ENCODE measurements at regions of chr13 and their contacts with region 1.

Region 1: GRCh38 chr13:50801087-50801931 is 42.2 kb downstream of the DLEU7 start:
- DNase-seq: peak; percentile 69 to 76 (median 71)
- H3K4me3 ChIP-seq: peak overlapping the region in 1 of 3 experiments; percentile 26
- H3K4me3 Mint-ChIP-seq: peak overlapping the region; percentile 45 to 74
- H3K27ac ChIP-seq: peak overlapping the region in 1 of 2 donors; percentile 3
- H3K27ac Mint-ChIP-seq: peak overlapping the region in 2 of 7 donors; percentile 5 to 6
- H3K4me1 ChIP-seq: peaks cover 18 to 30% of the 10 kb centered on the region in 2 donors
- H3K4me1 Mint-ChIP-seq: peaks cover 29% of the 10 kb centered on the region
- H3K27me3 ChIP-seq: no peaks in the 10 kb centered on the region
- H3K27me3 Mint-ChIP-seq: peaks cover 0 to 2% (median 0%) of the 10 kb centered on the region in 3 donors
- CTCF ChIP-seq: peak; percentile 88

Region 2: DNA sequence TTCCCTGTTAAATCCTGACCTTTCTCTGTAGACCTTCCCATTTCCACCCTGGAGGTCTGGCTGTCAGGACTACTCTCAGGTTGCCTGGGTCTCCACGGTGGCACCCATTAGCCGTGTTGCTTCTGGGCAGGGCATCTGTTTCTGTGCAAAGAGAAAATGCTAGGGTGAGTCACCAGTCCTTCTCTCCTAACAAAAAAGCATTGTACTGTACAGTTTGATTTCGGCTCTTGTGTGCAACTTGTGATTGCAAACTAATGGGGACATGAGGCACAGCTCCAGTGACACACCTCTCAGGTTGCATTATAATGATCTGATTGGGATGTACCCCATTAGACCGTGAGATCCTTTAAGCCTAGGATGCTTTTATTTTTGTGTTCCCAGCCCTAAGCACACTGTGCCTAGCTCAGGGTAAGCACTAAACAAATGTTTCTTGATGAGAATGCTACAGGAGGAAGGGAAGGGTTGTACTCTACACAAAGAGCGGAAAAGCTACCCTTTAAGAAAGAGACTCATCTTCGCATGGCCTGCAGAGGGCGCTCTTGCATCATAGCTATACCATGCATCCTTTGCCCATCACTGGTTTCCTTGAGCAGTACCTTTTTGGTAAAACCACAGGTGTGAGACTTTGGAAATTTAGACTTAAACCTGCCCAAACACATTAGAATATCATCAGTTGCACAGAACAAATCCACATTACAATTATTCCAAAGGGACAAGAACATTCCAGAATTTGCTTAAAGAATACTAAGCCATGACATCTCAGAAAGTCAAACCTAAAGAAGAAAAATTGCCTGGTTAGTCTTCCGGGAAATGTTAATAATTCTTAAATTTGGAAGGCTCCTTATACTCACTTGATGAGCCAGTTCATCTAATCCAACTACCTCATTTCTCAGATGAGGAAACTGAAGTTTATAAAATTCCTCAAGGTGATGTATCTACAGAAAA is 824.7 kb before region 1 on chr13:
- intact Hi-C with region 1: loop called in 1 of 2 experiments (anchors 10 kb)
- DNase-seq: peak; percentile 54 to 74 (median 71)
- H3K4me3 ChIP-seq: no peak overlapping the region
- H3K4me3 Mint-ChIP-seq: no peak overlapping the region
- H3K27ac ChIP-seq: no peak overlapping the region
- H3K27ac Mint-ChIP-seq: peak overlapping the region in 1 of 7 donors; percentile 38
- H3K4me1 ChIP-seq: no peaks in the 10 kb centered on the region
- H3K4me1 Mint-ChIP-seq: peaks cover 11% of the 10 kb centered on the region
- H3K27me3 ChIP-seq: no peaks in the 10 kb centered on the region
- H3K27me3 Mint-ChIP-seq: peaks cover 0 to 2% (median 0%) of the 10 kb centered on the region in 3 donors
- CTCF ChIP-seq: peak; percentile 94

Region 3: DNA sequence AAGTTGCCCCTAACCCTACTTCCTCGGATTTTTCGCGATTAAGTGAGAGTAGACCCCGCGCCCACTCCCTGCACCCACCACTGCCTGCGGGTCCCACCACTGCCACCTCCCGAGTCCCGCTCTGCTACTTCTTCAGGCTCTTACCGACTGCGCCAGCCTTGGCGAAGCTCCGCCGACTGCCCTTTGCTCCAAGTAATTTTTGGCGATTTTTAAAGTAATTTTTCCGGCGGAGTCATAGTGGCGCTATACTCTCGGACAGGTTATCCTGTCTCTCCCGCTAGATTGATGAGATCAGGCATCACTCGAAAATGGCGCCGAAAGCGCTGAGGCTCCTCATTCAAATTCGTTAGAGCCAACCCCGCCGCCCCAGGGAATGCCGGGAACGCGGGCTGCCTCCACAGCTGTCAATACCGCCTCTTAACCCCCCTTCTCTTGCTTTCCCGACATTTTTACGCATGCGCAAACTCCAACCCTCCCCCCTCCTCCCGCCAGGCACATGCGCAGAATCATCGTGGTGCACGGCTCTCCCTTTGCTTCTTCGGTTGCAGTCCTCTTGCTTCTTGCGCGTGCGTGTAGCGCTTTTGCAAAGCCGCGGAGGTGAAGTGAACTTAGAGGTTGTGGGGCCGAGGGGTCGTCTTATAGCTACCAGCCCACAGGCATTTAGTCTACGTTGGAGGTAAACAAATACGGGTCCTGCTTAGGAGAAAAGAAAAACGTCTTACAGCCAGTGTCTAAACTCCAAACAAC is 719.5 kb before region 1 on chr13:
- intact Hi-C with region 1: loop called in 1 of 2 experiments (anchors 5 kb)
- DNase-seq: peak; percentile 97 to 99 (median 97)
- H3K4me3 ChIP-seq: peak overlapping the region; percentile 79 to 94 (median 91)
- H3K4me3 Mint-ChIP-seq: peak overlapping the region; percentile 99 to 100
- H3K27ac ChIP-seq: peak overlapping the region; percentile 80 to 85
- H3K27ac Mint-ChIP-seq: peak overlapping the region; percentile 90 to 98 (median 95)
- H3K4me1 ChIP-seq: peaks cover 49 to 74% of the 10 kb centered on the region in 2 donors
- H3K4me1 Mint-ChIP-seq: peaks cover 50% of the 10 kb centered on the region
- H3K27me3 ChIP-seq: no peaks in the 10 kb centered on the region
- H3K27me3 Mint-ChIP-seq: no peaks in the 10 kb centered on the region
- CTCF ChIP-seq: no peak

Region 4: GRCh38 chr13:50626101-50626547 is 175.2 kb before region 1 on chr13:
- intact Hi-C with region 1: loop called in 1 of 2 experiments (anchors 10 kb)
- DNase-seq: peak; percentile 78 to 93 (median 88)
- H3K4me3 ChIP-seq: no peak overlapping the region
- H3K4me3 Mint-ChIP-seq: no peak overlapping the region
- H3K27ac ChIP-seq: peak overlapping the region; percentile 4 to 82
- H3K27ac Mint-ChIP-seq: peak overlapping the region; percentile 80 to 92 (median 89)
- H3K4me1 ChIP-seq: peaks cover 30 to 34% of the 10 kb centered on the region in 2 donors
- H3K4me1 Mint-ChIP-seq: peaks cover 32% of the 10 kb centered on the region
- H3K27me3 ChIP-seq: no peaks in the 10 kb centered on the region
- H3K27me3 Mint-ChIP-seq: no peaks in the 10 kb centered on the region
- CTCF ChIP-seq: no peak

Region 5: GRCh38 chr13:50713523-50714248 is 87.6 kb before region 1 on chr13:
- intact Hi-C with region 1: loop called in 1 of 2 experiments (anchors 10 kb)
- DNase-seq: peak; percentile 86 to 95 (median 93)
- H3K4me3 ChIP-seq: peak overlapping the region; percentile 34 to 80 (median 77)
- H3K4me3 Mint-ChIP-seq: peak overlapping the region; percentile 82 to 89
- H3K27ac ChIP-seq: peak overlapping the region; percentile 79 to 91
- H3K27ac Mint-ChIP-seq: peak overlapping the region; percentile 94 to 99 (median 98)
- H3K4me1 ChIP-seq: peaks cover 58 to 65% of the 10 kb centered on the region in 2 donors
- H3K4me1 Mint-ChIP-seq: peaks cover 75% of the 10 kb centered on the region
- H3K27me3 ChIP-seq: no peaks in the 10 kb centered on the region
- H3K27me3 Mint-ChIP-seq: no peaks in the 10 kb centered on the region
- CTCF ChIP-seq: no peak

Region 6: DNA sequence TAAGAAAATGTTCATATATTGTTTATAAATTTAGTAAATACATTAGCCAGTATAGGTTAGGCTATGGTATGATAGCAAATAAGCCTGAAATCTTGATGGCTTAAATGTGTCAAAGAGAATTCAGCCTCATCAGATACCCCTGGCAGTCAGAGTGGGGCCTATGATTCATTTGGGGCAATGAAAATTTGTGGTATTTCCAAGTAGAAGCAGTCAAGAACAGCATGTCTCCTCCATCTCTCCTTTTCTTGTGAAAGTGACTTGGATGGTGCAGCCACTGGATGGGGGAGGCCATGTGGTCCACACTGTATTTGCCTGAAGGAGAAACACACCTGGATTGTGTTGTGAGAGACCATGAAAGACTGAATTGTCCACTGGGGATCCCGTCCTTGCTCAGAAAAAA is 40.6 kb before region 1 on chr13:
- intact Hi-C with region 1: no loop called
- DNase-seq: no peak
- H3K4me3 ChIP-seq: no peak overlapping the region
- H3K4me3 Mint-ChIP-seq: no peak overlapping the region
- H3K27ac ChIP-seq: no peak overlapping the region
- H3K27ac Mint-ChIP-seq: peak overlapping the region in 1 of 7 donors; percentile 2
- H3K4me1 ChIP-seq: peaks cover 0 to 3% of the 10 kb centered on the region in 2 donors
- H3K4me1 Mint-ChIP-seq: peaks cover 12% of the 10 kb centered on the region
- H3K27me3 ChIP-seq: no peaks in the 10 kb centered on the region
- H3K27me3 Mint-ChIP-seq: peaks cover 1 to 4% (median 4%) of the 10 kb centered on the region in 3 donors
- CTCF ChIP-seq: no peak